Mammary epithelial cell (primary cell): ENCODE measurements at regions of chr1 and their contacts with region 1.

Region 1: GRCh38 chr1:112706908-112707663 is at the start of gene RHOC:
- DNase-seq: peak; percentile 86
- H3K4me3 ChIP-seq: peak within 1 kb of the TSS; percentile 70 to 87 (median 80)
- H3K27ac ChIP-seq: peak within 1 kb of the TSS; percentile 85
- H3K4me1 ChIP-seq: peaks cover 44% of the 10 kb centered on the region
- H3K27me3 ChIP-seq: no peaks in the 10 kb centered on the region
- CTCF ChIP-seq: peak; percentile 73 to 98
- total RNA-seq, gene RHOC: 383 to 495 TPM

Region 2: DNA sequence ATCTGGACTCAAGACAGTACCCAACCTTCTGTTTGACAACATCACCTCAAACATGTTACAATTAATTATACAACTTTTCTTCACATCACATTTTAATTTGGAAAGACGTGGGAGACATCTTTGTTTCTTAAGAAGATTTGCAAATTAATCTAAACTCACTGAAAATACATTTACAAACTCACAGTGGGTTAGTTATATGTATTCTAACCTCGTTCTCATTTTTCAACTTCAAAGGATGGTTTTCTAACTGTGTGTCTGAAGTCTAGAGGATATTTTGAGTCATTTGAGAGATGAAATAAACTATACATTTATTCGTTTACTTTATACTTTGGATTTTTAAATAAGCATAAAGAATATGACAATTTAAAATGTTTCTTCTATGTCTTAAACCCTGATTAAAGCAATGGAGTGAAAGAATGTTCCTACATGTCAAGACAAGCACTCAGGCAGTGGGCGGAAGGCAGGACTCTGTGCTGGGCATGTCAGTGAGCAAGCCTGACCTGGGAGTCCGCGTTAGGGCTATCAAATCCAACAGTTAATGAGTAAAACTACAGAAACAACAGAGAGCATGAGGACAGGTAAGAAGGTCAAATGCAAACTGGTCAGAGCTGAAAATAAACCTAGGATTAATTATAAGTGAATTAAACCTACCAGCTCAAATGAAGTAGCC is 387.6 kb before region 1 on chr1:
- CTCF ChIA-PET with region 1: no interaction called
- dilution Hi-C with region 1: no loop called
- in situ Hi-C with region 1: no loop called
- intact Hi-C with region 1: loop called (anchors 1 kb)
- DNase-seq: peak; percentile 78
- H3K4me3 ChIP-seq: peak overlapping the region; percentile 20 to 51 (median 49)
- H3K27ac ChIP-seq: peak overlapping the region; percentile 61
- H3K4me1 ChIP-seq: peaks cover 21% of the 10 kb centered on the region
- H3K27me3 ChIP-seq: no peaks in the 10 kb centered on the region
- CTCF ChIP-seq: no peak

Region 3: DNA sequence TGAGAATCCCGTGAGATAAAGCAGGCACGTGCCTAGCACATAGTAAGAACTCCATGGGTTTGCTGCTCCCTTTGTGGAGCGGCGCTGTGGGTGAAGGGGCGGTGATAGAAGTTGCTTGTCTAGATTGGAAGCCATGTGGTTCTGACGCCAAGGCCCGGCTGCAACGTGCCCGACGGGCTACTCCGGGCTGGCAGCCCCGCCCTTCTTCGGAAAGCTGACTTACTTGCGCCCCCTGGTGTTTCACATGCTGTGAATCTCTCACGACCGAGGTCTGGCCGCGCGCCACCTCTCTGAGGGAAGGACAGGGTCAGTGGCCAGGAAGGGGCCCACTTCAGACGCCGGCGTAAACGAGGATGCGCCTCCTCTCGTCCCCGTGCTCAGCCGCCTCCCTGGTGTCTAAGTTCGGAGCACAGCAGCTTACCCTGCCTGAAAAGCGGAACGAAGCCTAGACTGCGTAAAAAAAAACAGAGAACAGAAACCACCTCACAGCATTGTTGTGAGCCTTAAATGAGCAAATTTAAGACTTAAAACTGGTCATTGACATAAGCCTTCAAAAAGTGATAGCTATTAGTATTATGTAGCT is 240.9 kb before region 1 on chr1:
- CTCF ChIA-PET with region 1: no interaction called
- dilution Hi-C with region 1: no loop called
- in situ Hi-C with region 1: no loop called
- intact Hi-C with region 1: loop called (anchors 1 kb)
- DNase-seq: peak; percentile 84
- H3K4me3 ChIP-seq: peak overlapping the region in 2 of 3 experiments; percentile 21 to 46
- H3K27ac ChIP-seq: no peak overlapping the region
- H3K4me1 ChIP-seq: peaks cover 37% of the 10 kb centered on the region
- H3K27me3 ChIP-seq: no peaks in the 10 kb centered on the region
- CTCF ChIP-seq: peak; percentile 62 to 85

Region 4: DNA sequence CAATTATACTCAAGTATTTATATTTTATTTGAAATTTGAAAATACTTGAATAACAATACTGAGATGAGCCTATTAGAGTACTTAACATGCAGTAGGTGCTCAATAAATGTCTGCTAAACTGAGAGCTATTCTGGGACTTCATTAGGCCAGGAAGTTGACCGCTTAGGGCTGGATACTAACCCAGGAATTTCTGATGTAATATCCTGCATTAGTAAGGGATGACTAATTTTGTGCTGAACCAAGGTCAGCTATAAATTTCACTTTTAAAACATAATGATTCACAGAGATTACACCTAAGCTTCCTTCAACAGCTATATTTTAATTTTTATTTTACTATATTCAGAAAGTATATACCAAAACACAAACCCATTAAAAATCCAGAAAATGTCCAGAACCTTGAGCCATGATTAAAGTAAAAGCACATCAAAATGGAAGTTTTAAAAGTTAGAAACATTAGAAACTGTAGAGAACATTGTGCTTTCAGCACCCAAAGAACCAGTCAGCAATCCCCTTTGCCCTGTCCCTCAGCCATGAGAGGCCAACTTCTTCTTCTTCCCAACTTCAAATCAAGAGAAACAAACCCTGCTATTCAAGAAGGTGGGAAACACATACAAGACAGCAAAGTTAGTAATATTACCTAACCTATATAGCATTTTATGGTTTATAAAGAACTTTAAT is 162.9 kb before region 1 on chr1:
- CTCF ChIA-PET with region 1: no interaction called
- dilution Hi-C with region 1: no loop called
- in situ Hi-C with region 1: no loop called
- intact Hi-C with region 1: loop called (anchors 1 kb)
- DNase-seq: peak; percentile 82
- H3K4me3 ChIP-seq: peak overlapping the region in 1 of 3 experiments; percentile 18
- H3K27ac ChIP-seq: peak overlapping the region; percentile 93
- H3K4me1 ChIP-seq: peaks cover 17% of the 10 kb centered on the region
- H3K27me3 ChIP-seq: no peaks in the 10 kb centered on the region
- CTCF ChIP-seq: no peak

Region 5: GRCh38 chr1:112619520-112620376 is 87.3 kb before region 1 on chr1 and contains the start of gene CAPZA1:
- CTCF ChIA-PET with region 1: no interaction called
- dilution Hi-C with region 1: no loop called
- in situ Hi-C with region 1: loop called in 1 of 2 experiments (anchors 5 kb)
- intact Hi-C with region 1: loop called (anchors 1 kb)
- DNase-seq: peak; percentile 93
- H3K4me3 ChIP-seq: peak within 1 kb of the TSS; percentile 83 to 98 (median 85)
- H3K27ac ChIP-seq: peak within 1 kb of the TSS; percentile 96
- H3K4me1 ChIP-seq: peaks cover 19% of the 10 kb centered on the region
- H3K27me3 ChIP-seq: no peaks in the 10 kb centered on the region
- CTCF ChIP-seq: no peak
- total RNA-seq, gene CAPZA1: 188 to 192 TPM

Region 6: GRCh38 chr1:112674439-112674985 is 32.6 kb before region 1 on chr1 and contains the start of gene MOV10:
- CTCF ChIA-PET with region 1: no interaction called
- dilution Hi-C with region 1: no loop called
- in situ Hi-C with region 1: no loop called
- intact Hi-C with region 1: loop called (anchors 1 kb)
- DNase-seq: peak; percentile 76
- H3K4me3 ChIP-seq: peak within 1 kb of the TSS; percentile 69 to 86 (median 72)
- H3K27ac ChIP-seq: peak within 1 kb of the TSS; percentile 78
- H3K4me1 ChIP-seq: peaks cover 22% of the 10 kb centered on the region
- H3K27me3 ChIP-seq: no peaks in the 10 kb centered on the region
- CTCF ChIP-seq: peak in 1 of 2 donors; percentile 13
- total RNA-seq, gene MOV10: 52.2 to 76.0 TPM

Region 7: GRCh38 chr1:112778137-112778536 is 71.1 kb after region 1 on chr1:
- CTCF ChIA-PET with region 1: no interaction called
- dilution Hi-C with region 1: no loop called
- in situ Hi-C with region 1: no loop called
- intact Hi-C with region 1: no loop called
- DNase-seq: peak; percentile 29
- H3K4me3 ChIP-seq: no peak overlapping the region
- H3K27ac ChIP-seq: no peak overlapping the region
- H3K4me1 ChIP-seq: no peaks in the 10 kb centered on the region
- H3K27me3 ChIP-seq: no peaks in the 10 kb centered on the region
- CTCF ChIP-seq: no peak

Region 8: DNA sequence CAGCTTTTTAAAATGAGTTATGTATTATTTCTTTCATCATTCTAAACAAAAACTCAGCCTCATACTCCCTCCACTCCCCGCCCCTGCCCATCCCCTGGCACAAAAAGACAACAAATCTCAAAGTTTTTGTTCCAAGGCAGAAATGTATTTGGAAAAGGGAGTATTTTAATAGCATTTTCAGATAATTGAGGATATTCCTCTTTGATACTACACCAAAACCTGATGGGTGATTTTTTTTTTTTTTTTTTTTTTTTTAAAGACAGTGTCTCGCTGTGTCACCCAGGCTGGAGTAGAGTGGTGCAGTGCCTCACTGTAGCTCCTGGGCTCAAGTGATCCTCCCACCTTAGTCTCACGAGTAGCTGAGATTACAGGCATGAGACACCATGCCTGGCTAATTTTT is 232.7 kb after region 1 on chr1:
- CTCF ChIA-PET with region 1: no interaction called
- dilution Hi-C with region 1: no loop called
- in situ Hi-C with region 1: no loop called
- intact Hi-C with region 1: no loop called
- DNase-seq: no peak
- H3K4me3 ChIP-seq: no peak overlapping the region
- H3K27ac ChIP-seq: no peak overlapping the region
- H3K4me1 ChIP-seq: peaks cover 36% of the 10 kb centered on the region
- H3K27me3 ChIP-seq: no peaks in the 10 kb centered on the region
- CTCF ChIP-seq: no peak